Activated CD4-positive, alpha-beta memory T cell treated with anti-CD3 and anti-CD28 coated beads, Interleukin-2, amount 10 ng/mL, durations not matched to agents 7 days and 5 days (primary cell): ENCODE measurements at regions of chr10 and their contacts with region 1.

Region 1: GRCh38 chr10:100508691-100509150 is 10.9 kb downstream of the SEC31B start:
- DNase-seq: peak; percentile 62
- H3K4me3 Mint-ChIP-seq: peak overlapping the region; percentile 80
- H3K27ac Mint-ChIP-seq: peak overlapping the region; percentile 94
- H3K4me1 Mint-ChIP-seq: peaks cover 93% of the 10 kb centered on the region
- H3K27me3 Mint-ChIP-seq: no peaks in the 10 kb centered on the region

Region 2: GRCh38 chr10:100204370-100204769 is 304.4 kb before region 1 on chr10:
- CTCF ChIA-PET with region 1: no interaction called
- POLR2A ChIA-PET with region 1: no interaction called
- DNase-seq: no peak
- H3K4me3 Mint-ChIP-seq: no peak overlapping the region
- H3K27ac Mint-ChIP-seq: no peak overlapping the region
- H3K4me1 Mint-ChIP-seq: peaks cover 12% of the 10 kb centered on the region
- H3K27me3 Mint-ChIP-seq: no peaks in the 10 kb centered on the region

Region 3: GRCh38 chr10:100286051-100287033 is 222.4 kb before region 1 on chr10 and contains the start of gene BLOC1S2:
- CTCF ChIA-PET with region 1: interaction called, 3 read pairs
- POLR2A ChIA-PET with region 1: interaction called, 29 read pairs
- DNase-seq: peak; percentile 88
- H3K4me3 Mint-ChIP-seq: peak within 1 kb of the TSS; percentile 100
- H3K27ac Mint-ChIP-seq: peak within 1 kb of the TSS; percentile 98
- H3K4me1 Mint-ChIP-seq: peaks cover 29% of the 10 kb centered on the region
- H3K27me3 Mint-ChIP-seq: no peaks in the 10 kb centered on the region
- total RNA-seq, gene BLOC1S2: 47.5 to 48.8 TPM

Region 4: DNA sequence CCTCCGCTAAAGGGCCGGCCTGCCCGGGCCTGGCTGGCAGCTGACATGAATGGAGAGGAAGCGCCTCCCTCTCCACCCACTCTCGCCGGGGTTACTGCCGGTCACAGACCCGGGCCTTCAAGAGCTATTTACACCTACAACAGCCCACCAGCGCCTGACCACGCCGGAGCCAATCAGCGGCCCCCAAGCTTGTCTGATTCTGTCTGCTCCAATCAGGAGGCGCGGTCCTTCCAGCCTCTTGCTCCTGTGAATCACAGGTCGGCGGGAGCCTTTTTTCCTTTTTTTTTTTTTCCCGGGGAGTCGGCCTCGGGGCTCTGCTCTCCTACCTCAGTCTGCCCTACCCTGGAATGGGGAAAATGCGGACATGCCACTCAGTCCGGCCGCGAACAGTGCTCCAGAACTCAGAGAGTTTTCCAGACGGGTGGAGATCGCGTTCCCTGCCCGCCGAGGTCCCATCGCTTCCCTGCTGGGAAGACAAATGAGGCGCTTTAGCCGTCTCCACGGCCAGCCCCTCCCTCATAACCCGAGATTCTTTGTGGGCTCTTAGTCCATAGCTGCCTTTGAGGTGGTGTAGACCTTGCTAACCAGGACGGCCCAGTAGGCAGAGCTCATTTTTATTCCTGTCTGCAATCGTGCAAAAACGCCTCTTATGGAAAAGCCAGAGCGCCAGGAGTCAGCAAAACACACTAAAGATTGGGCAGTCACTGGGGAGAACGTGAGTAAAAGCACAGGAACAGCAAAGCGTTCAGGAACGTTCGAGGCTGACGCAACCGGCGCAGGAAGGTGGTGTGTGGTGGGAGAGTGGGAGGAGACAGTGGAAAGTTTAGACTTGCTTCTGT is 135.2 kb before region 1 on chr10:
- CTCF ChIA-PET with region 1: interaction called, 13 read pairs
- POLR2A ChIA-PET with region 1: interaction called, 32 read pairs
- DNase-seq: peak; percentile 96
- H3K4me3 Mint-ChIP-seq: no peak overlapping the region
- H3K27ac Mint-ChIP-seq: no peak overlapping the region
- H3K4me1 Mint-ChIP-seq: peaks cover 39% of the 10 kb centered on the region
- H3K27me3 Mint-ChIP-seq: no peaks in the 10 kb centered on the region

Region 5: GRCh38 chr10:100481462-100482081 is 27.1 kb before region 1 on chr10:
- CTCF ChIA-PET with region 1: interaction called, 114 read pairs
- POLR2A ChIA-PET with region 1: interaction called, 104 read pairs
- DNase-seq: peak; percentile 96
- H3K4me3 Mint-ChIP-seq: peak overlapping the region; percentile 70
- H3K27ac Mint-ChIP-seq: no peak overlapping the region
- H3K4me1 Mint-ChIP-seq: peaks cover 22% of the 10 kb centered on the region
- H3K27me3 Mint-ChIP-seq: peaks cover 20% of the 10 kb centered on the region

Region 6: GRCh38 chr10:100518761-100519241 is 10.1 kb after region 1 on chr10:
- CTCF ChIA-PET with region 1: interaction called, 112 read pairs
- POLR2A ChIA-PET with region 1: interaction called, 135 read pairs
- DNase-seq: peak; percentile 71
- H3K4me3 Mint-ChIP-seq: no peak overlapping the region
- H3K27ac Mint-ChIP-seq: peak overlapping the region; percentile 37
- H3K4me1 Mint-ChIP-seq: peaks cover 39% of the 10 kb centered on the region
- H3K27me3 Mint-ChIP-seq: no peaks in the 10 kb centered on the region

Region 7: DNA sequence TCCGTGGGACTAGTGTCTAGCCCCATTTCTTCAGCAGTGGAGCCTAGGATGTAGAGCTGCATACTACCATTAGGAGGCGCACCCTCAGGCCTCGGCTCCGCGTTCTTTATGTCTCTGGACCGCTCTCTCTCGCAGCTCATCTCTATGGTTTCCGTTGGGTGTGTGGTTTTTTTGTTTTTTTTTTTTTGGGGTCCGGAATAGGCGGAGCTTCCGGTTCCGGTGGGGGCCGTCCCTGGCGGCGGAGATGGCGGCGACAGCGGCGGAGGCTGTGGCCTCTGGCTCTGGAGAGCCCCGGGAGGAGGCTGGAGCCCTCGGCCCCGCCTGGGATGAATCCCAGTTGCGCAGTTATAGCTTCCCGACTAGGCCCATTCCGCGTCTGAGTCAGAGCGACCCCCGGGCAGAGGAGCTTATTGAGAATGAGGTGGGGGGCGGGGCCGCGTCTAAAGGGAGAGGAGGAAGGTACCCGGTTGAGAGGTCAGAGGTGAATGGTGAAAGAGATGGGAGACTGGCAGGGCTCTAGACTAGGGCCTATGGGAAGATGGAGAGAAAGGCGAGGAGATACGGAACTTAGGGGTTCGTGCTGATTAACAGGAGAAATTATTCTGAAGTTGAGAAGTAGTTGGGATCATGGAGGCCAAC is 27.1 kb after region 1 on chr10 and contains the start of gene HIF1AN:
- CTCF ChIA-PET with region 1: interaction called, 33 read pairs
- POLR2A ChIA-PET with region 1: interaction called, 135 read pairs
- DNase-seq: peak; percentile 92
- H3K4me3 Mint-ChIP-seq: no peak within 1 kb of the TSS
- H3K27ac Mint-ChIP-seq: peak within 1 kb of the TSS; percentile 22
- H3K4me1 Mint-ChIP-seq: peaks cover 16% of the 10 kb centered on the region
- H3K27me3 Mint-ChIP-seq: no peaks in the 10 kb centered on the region
- total RNA-seq, gene HIF1AN: 57.7 to 58.8 TPM